T-cell (primary cell): ENCODE measurements at regions of chr1 and their contacts with region 1.

Region 1: GRCh38 chr1:159089184-159089791 is 12.7 kb upstream of the AIM2 start:
- DNase-seq: peak in 6 of 35 experiments; percentile 10 to 69 (median 18)
- ATAC-seq: peak in 1 of 4 experiments; percentile 33
- H3K4me3 ChIP-seq: no peak overlapping the region
- H3K4me3 Mint-ChIP-seq: no peak overlapping the region
- H3K27ac ChIP-seq: no peak overlapping the region
- H3K27ac Mint-ChIP-seq: no peak overlapping the region
- H3K4me1 ChIP-seq: no peaks in the 10 kb centered on the region
- H3K4me1 Mint-ChIP-seq: peaks cover 0 to 31% (median 18%) of the 10 kb centered on the region in 3 donors
- H3K27me3 ChIP-seq: no peaks in the 10 kb centered on the region
- H3K27me3 Mint-ChIP-seq: peaks cover 0 to 3% of the 10 kb centered on the region in 2 donors

Region 2: DNA sequence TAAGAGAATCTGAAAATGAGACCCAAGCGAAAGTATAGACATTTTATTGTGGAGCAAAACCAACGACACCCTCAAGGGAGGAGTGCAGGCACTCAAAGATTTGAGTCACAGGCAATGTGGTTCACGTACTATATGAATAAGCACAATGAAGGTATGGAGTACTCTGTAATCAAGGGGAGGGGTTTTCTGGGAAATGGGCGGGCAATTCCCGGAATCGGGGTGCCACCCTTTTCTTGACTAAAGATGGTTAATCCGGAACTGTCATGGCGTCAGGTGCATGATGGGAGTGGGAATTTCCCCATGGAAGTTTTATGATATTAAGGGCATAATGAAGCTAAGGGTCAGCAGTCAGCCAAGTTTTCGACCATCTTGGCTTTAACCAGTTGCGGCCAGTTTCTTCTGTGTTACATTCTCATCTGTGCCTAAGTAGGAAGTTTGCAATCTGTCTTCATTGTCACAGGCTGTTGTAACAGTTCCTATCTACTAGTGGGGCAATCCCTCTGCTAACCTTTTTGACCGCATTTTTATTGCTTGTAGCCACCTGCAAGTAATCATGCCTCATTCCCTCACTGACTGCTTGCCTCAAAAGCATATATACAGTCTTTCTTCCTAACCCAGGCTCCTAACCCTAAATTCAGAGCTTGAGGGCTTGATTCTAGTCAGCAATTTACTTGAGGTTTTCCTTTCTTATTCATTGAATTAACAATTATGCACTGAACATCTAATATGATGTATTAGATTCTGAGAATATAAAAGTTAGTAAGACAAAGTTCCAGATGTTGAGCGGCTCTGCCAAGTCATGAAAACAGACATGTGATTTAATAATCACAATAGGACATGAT is 11.9 kb before region 1 on chr1:
- CTCF ChIA-PET with region 1: interaction called, 3 to 15 read pairs
- POLR2A ChIA-PET with region 1: interaction called in 1 of 2 experiments, 3 read pairs
- DNase-seq: peak; percentile 41 to 88 (median 75)
- ATAC-seq: peak; percentile 81 to 87 (median 84)
- H3K4me3 ChIP-seq: peak overlapping the region in 1 of 2 donors; percentile 41
- H3K4me3 Mint-ChIP-seq: peak overlapping the region; percentile 55 to 81 (median 80)
- H3K27ac ChIP-seq: peak overlapping the region; percentile 92
- H3K27ac Mint-ChIP-seq: peak overlapping the region; percentile 96
- H3K4me1 ChIP-seq: peaks cover 0 to 17% of the 10 kb centered on the region in 2 experiments
- H3K4me1 Mint-ChIP-seq: peaks cover 7 to 36% (median 19%) of the 10 kb centered on the region in 3 donors
- H3K27me3 ChIP-seq: no peaks in the 10 kb centered on the region
- H3K27me3 Mint-ChIP-seq: peaks cover 0 to 4% of the 10 kb centered on the region in 2 donors

Region 3: DNA sequence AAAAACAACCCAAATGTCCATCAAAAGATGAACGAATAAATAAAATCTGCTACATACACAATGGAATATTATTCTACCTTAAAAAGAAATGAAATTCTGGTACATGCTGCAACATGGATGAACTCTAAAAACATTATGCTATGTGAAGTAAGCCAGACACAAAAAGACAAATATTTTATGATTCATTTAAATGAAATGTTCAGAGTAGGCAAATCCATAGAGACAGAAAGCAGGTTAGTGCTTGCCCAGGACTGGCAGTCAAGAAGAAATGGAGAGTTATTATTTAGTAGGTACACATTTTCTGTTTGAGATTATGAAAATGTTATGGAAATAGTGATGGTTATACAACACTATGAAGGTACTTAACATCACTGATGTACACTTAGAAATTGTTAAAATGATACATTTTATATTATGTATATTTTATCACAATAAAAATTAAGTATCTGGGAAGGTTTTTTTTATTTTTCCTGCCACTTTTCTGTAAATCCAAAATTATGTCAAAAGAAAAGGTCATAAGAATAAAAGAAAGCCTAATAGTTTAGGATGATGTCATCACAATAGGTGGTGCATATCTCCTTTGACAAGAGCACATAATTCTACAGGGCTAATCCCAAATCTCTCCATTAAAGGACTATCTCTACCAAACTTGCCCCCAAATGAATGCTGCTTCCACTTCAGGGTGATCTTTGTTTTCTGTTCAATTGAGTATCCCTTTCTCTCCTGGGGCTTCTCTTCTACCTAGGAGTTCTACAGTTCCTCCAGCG is 172.6 kb after region 1 on chr1:
- CTCF ChIA-PET with region 1: interaction called in 1 of 2 experiments, 10 read pairs
- POLR2A ChIA-PET with region 1: no interaction called
- DNase-seq: no peak
- ATAC-seq: no peak
- H3K4me3 ChIP-seq: no peak overlapping the region
- H3K4me3 Mint-ChIP-seq: no peak overlapping the region
- H3K27ac ChIP-seq: no peak overlapping the region
- H3K27ac Mint-ChIP-seq: no peak overlapping the region
- H3K4me1 ChIP-seq: peaks cover 0 to 5% of the 10 kb centered on the region in 2 experiments
- H3K4me1 Mint-ChIP-seq: peaks cover 6 to 8% (median 7%) of the 10 kb centered on the region in 3 donors
- H3K27me3 ChIP-seq: no peaks in the 10 kb centered on the region
- H3K27me3 Mint-ChIP-seq: peaks cover 4 to 14% of the 10 kb centered on the region in 2 donors